ENCODE measurements at regions of chr7 and their contacts with region 1.

Region 1: DNA sequence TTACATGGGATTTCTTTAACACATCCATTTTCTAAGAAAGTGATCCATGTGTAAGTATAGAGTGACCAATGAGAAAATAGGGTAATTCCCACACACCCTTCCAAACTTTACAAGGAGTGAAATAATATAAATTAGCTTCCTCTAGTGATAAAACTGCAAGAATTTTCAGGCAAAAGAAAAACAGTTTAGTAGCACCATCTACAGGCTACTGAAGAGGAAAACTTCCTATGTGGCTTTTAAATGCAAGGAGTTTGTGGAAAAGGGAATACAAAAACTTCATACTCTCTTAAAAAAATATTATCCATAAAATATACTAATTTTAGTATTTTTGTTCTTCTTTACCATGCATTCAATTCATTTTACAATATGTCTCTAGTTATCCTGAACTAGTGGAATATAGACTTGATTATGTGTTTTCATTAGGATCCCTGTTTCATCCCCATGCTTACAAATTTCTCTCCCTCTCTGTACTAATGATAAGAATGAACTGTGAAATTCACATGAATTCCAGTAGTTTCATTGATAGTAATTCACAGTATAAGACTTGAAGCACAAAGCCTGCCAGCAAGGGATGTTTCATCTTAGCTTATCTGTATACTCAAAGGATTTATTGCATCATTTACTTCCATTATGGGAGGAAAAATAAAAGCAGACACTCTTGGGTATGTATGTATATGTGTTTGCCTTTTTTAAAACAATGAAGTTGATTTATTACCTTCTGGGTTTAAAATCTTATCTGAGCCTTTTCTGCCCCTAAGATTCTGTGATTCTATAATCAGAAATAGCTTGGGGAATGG is 442.9 kb downstream of the AUTS2 start:
- DNase-seq: no peak
- ATAC-seq: no peak
- H3K4me3 ChIP-seq: no peak overlapping the region
- H3K4me1 ChIP-seq: no peaks in the 10 kb centered on the region
- CTCF ChIP-seq: no peak

Region 2: DNA sequence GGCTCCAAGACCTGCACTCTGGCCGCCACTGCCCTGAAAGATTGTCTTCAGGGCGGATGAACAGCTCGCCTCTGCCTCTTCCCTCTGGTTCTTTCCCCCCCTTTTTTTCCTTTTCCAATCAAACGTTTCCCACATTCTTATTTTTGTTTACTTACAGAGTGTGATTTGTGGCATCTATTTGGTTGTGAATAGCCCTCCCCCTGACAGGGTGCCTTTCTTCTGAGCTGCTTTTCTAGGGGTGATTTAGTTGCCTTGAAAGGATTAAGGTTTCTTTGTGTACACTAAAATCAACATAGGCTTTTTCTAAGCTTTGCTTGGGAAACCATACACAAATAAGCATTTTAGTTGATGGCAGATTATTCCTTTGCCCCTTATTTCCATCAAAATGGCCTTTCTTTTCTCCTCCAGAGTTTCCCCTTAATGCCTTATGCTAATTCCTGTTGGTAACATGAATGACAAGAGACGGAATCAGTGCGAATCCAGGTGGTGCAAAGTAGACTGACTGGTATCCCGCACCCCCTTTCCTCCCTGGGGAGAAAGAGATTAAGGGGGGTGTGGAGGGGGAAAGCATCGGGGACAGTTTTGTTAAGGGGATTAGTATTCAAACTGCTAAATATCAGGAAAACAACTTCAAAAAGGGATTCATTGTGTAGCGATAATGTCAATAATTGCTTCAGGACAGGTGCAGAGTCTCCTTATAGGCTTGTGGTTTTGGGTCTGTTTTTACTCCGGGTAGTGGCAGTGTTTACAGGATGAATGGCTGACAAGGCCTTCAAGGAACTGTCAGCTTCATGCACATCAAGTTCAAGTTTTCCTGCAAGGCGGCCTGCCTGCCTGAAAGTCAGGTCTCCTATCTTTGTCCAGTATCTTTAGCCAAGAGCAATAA is 659.1 kb after region 1 on chr7:
- intact Hi-C with region 1: loop called in 1 of 2 experiments (anchors 10 kb)
- DNase-seq: no peak
- ATAC-seq: no peak
- H3K4me3 ChIP-seq: no peak overlapping the region
- H3K4me1 ChIP-seq: no peaks in the 10 kb centered on the region
- CTCF ChIP-seq: no peak